AG04450 (cell line): ENCODE measurements at regions of chr20 and their contacts with region 1.

Region 1: GRCh38 chr20:50070991-50071888 is 41.7 kb downstream of the UBE2V1 start:
- DNase-seq: peak; percentile 38
- H3K4me3 ChIP-seq: peak overlapping the region; percentile 56
- H3K27ac ChIP-seq: no peak overlapping the region
- H3K27me3 ChIP-seq: no peaks in the 10 kb centered on the region
- CTCF ChIP-seq: peak; percentile 98

Region 2: DNA sequence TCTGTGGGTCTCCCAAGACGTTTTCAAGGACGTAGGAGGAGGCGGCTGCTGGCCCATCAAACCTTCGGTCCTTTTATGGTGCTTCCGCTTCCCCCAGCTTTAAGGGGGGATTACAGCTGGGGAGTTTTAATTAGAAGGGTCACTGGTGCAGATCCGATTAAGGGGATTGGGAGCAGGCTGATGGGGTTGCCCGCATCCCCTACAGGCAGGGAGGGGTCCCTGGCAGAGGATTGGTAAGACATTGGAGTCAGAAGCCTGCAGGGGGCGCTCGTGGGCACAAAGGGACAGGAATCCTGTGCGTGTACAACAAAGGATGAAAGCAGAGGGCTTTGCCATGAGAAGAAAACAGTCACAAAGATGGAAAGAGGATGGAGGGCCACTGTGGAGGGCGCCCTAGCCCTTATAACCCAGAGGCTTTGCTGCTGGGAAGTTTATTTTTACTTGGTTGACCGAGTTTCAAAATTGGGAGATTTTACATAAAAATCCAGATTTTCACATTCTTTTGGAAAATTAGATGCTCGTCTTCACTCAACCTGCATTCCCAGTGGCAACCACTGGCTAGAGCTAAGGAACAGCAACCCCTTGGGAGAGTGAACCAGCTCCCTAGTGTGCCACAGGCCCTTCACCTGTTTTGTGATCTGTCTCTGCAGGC is 686.7 kb before region 1 on chr20:
- CTCF ChIA-PET with region 1: no interaction called
- POLR2A ChIA-PET with region 1: no interaction called
- DNase-seq: no peak
- H3K4me3 ChIP-seq: no peak overlapping the region
- H3K27ac ChIP-seq: no peak overlapping the region
- H3K27me3 ChIP-seq: peaks cover 33% of the 10 kb centered on the region
- CTCF ChIP-seq: peak; percentile 71

Region 3: DNA sequence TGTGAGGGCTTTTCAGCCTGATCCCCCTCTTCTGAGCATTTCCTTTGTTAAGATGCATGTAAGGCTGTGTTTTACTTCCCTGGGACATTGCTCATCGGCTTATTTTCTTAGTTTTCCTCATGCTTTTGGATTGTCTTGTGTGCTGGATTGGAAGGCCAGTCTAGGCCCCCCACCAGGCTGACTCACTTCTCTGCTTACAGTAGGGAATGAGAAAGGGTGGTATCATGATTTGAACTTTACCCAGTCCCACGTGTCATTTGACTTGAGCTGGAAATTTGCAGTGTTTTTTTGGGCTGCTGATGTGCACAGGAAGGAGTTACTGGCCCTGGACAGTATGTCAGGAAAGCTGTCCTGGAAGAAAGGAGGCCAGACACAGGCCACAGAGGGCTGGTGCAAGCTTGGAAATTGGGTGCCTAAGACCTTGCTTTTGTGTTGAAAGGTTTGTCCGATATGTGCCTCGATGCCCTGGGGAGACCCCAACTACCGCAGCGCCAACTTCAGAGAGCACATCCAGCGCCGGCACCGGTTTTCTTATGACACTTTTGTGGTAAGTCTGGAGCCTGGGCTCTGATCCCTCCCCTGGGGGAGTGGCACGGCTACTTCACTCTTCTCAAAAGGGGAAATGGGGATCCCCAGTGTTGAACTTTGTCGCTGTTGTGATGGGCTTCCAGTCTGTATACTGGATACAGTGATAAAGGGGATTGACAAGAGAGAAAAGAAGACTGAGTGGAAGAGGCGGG is 122.3 kb before region 1 on chr20:
- CTCF ChIA-PET with region 1: interaction called, 19 read pairs
- POLR2A ChIA-PET with region 1: no interaction called
- DNase-seq: peak; percentile 92
- H3K4me3 ChIP-seq: no peak overlapping the region
- H3K27ac ChIP-seq: peak overlapping the region; percentile 100
- H3K27me3 ChIP-seq: no peaks in the 10 kb centered on the region
- CTCF ChIP-seq: no peak

Region 4: GRCh38 chr20:49989234-49990065 is 81.8 kb before region 1 on chr20:
- CTCF ChIA-PET with region 1: interaction called, 419 read pairs
- POLR2A ChIA-PET with region 1: interaction called, 38 read pairs
- DNase-seq: peak; percentile 59
- H3K4me3 ChIP-seq: no peak overlapping the region
- H3K27ac ChIP-seq: peak overlapping the region; percentile 95
- H3K27me3 ChIP-seq: no peaks in the 10 kb centered on the region
- CTCF ChIP-seq: no peak

Region 5: GRCh38 chr20:50048420-50049166 is 22.6 kb before region 1 on chr20:
- CTCF ChIA-PET with region 1: interaction called, 12 read pairs
- POLR2A ChIA-PET with region 1: no interaction called
- DNase-seq: no peak
- H3K4me3 ChIP-seq: no peak overlapping the region
- H3K27ac ChIP-seq: no peak overlapping the region
- H3K27me3 ChIP-seq: no peaks in the 10 kb centered on the region
- CTCF ChIP-seq: no peak

Region 6: DNA sequence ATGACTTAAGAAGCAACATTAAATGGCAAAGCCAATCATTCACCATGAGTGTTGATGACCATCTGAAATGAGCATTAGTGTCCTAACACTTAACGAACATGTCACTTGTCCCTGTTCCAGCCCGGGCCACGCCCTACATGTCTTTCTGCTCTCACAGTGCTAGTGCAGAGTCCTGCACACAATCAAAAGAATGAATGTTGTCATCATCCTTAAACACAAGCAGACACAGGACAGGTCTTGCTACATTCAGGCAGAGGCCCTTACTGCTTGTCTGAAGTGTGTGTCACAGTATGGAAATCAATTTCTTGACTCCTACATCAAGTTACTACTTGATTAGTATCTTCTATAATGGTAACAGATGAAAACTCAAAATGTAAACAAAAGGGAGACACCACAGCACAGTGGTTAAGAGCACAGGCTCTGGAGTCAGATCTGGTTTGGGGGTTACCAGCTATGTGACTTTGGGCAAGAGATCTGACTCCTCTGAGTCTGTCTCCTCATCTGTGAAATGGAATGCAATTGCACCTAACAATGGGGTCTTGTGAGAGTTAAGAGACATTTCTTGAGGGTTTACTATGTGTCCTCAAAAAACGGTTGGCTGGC is 24.3 kb after region 1 on chr20:
- CTCF ChIA-PET with region 1: interaction called, 25 read pairs
- POLR2A ChIA-PET with region 1: no interaction called
- DNase-seq: no peak
- H3K4me3 ChIP-seq: no peak overlapping the region
- H3K27ac ChIP-seq: no peak overlapping the region
- H3K27me3 ChIP-seq: no peaks in the 10 kb centered on the region
- CTCF ChIP-seq: no peak

Region 7: GRCh38 chr20:50126691-50127116 is 55.5 kb after region 1 on chr20:
- CTCF ChIA-PET with region 1: no interaction called
- POLR2A ChIA-PET with region 1: no interaction called
- DNase-seq: no peak
- H3K4me3 ChIP-seq: no peak overlapping the region
- H3K27ac ChIP-seq: peak overlapping the region; percentile 31
- H3K27me3 ChIP-seq: no peaks in the 10 kb centered on the region
- CTCF ChIP-seq: no peak

Region 8: DNA sequence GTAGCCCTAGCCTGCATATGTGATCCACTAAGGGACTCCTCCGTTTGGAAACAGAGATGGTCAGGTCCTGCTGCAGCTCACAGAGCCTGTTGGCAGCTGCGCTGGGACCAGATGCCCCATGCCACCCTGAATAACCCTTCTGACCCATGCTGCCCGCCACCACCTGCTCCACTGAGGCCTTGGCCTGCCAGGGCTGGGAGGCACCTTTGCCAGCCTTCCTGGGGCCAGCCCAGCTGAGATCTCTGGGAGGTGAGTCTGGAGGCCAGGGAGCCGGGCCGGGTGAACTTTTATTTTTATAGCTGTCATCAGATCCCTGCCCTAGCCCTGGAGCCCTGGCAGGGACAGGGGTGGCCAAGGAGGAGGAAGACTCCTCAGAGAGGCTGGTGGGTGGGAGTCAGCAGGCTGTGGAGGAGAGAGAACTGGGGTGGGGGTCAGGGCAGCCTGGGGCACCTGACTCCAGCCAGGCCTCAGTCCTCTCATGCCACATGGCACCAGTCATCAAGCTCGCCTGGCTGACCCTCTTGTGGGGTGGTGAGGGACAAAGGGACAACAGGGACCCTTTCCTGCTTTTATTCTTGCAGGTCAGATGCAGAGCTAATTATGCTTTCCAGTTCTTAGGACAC is 129.4 kb after region 1 on chr20:
- CTCF ChIA-PET with region 1: no interaction called
- POLR2A ChIA-PET with region 1: no interaction called
- DNase-seq: no peak
- H3K4me3 ChIP-seq: no peak overlapping the region
- H3K27ac ChIP-seq: no peak overlapping the region
- H3K27me3 ChIP-seq: no peaks in the 10 kb centered on the region
- CTCF ChIP-seq: no peak